ENCODE measurements at regions of chr1 and their contacts with region 1.

Region 1: GRCh38 chr1:9539165-9539828 is at the start of gene SLC25A33:
- DNase-seq: peak; percentile 97

Region 2: GRCh38 chr1:9529190-9529589 is 10.1 kb before region 1 on chr1:
- CTCF ChIA-PET with region 1: interaction called, 3 read pairs
- POLR2A ChIA-PET with region 1: interaction called, 17 read pairs
- DNase-seq: no peak

Region 3: DNA sequence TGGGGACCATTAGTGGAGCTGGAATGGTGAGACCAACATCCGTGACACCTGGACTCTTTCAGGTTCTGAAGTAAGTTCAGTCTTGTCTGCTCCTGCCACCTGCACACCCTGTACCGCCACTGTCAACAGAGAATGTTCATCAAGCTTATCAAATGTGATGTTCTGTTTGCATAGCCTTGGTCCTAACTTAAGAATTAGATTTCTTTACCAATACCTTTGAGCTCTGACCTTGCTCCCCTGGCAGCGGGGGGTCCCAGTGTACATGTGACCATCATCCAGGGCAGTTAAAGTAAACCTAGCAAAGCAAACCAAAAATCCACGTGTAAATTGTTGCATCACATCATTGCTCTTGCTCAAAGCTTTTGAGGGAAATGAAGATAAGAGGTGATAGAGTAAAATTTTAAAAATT is 14.4 kb after region 1 on chr1:
- CTCF ChIA-PET with region 1: no interaction called
- POLR2A ChIA-PET with region 1: interaction called, 12 read pairs
- DNase-seq: no peak

Measured in HEK293T (cell line).